ENCODE measurements at regions of chr17 and their contacts with region 1.

Region 1: GRCh38 chr17:34420254-34420766 is 57.3 kb upstream of the CCL1 start:
- DNase-seq: peak; percentile 47 to 65 (median 64)
- H3K4me3 ChIP-seq: no peak overlapping the region
- H3K4me3 Mint-ChIP-seq: no peak overlapping the region
- H3K27ac ChIP-seq: no peak overlapping the region
- H3K27ac Mint-ChIP-seq: no peak overlapping the region
- H3K4me1 ChIP-seq: peaks cover 9% of the 10 kb centered on the region in 2 donors
- H3K4me1 Mint-ChIP-seq: peaks cover 10% of the 10 kb centered on the region
- H3K27me3 ChIP-seq: peaks cover 6 to 21% of the 10 kb centered on the region in 2 donors
- H3K27me3 Mint-ChIP-seq: peaks cover 13 to 37% (median 27%) of the 10 kb centered on the region in 3 donors
- CTCF ChIP-seq: peak; percentile 96

Region 2: GRCh38 chr17:34370997-34371395 is 49.3 kb before region 1 on chr17:
- intact Hi-C with region 1: no loop called
- DNase-seq: peak; percentile 60 to 79 (median 77)
- H3K4me3 ChIP-seq: peak overlapping the region in 1 of 3 experiments; percentile 13
- H3K4me3 Mint-ChIP-seq: peak overlapping the region in 1 of 2 donors; percentile 35
- H3K27ac ChIP-seq: peak overlapping the region; percentile 81 to 85
- H3K27ac Mint-ChIP-seq: peak overlapping the region in 4 of 7 donors; percentile 89 to 94 (median 92)
- H3K4me1 ChIP-seq: peaks cover 76 to 82% of the 10 kb centered on the region in 2 donors
- H3K4me1 Mint-ChIP-seq: peaks cover 14% of the 10 kb centered on the region
- H3K27me3 ChIP-seq: no peaks in the 10 kb centered on the region
- H3K27me3 Mint-ChIP-seq: peaks cover 0 to 2% (median 0%) of the 10 kb centered on the region in 3 donors
- CTCF ChIP-seq: no peak

Region 3: GRCh38 chr17:34465789-34466188 is 45.5 kb after region 1 on chr17:
- intact Hi-C with region 1: no loop called
- DNase-seq: no peak
- H3K4me3 ChIP-seq: no peak overlapping the region
- H3K4me3 Mint-ChIP-seq: no peak overlapping the region
- H3K27ac ChIP-seq: no peak overlapping the region
- H3K27ac Mint-ChIP-seq: no peak overlapping the region
- H3K4me1 ChIP-seq: no peaks in the 10 kb centered on the region
- H3K4me1 Mint-ChIP-seq: no peaks in the 10 kb centered on the region
- H3K27me3 ChIP-seq: peaks cover 0 to 6% of the 10 kb centered on the region in 2 donors
- H3K27me3 Mint-ChIP-seq: peaks cover 5 to 13% (median 9%) of the 10 kb centered on the region in 3 donors
- CTCF ChIP-seq: no peak

Region 4: DNA sequence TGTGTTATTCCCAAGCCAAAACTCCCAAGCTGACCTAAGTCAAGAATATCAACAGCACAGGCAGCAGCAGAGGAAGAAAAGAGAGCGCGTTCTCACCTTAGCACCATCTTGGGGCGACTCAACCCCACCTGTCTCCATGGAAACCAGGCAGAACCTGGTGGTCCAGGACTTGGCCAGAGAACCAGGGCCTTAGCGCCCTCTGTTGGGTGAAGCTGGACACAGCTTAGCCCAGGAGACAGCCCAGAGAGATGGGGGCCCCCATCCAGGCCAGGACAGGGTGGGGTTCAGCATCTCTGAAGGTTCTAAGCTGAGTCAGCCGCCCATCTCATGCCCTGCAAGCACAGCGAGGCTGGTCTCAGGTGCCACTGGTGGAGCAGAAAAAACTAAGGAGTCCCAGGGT is 99.0 kb after region 1 on chr17:
- intact Hi-C with region 1: loop called in 1 of 2 experiments (anchors 5 kb)
- DNase-seq: peak; percentile 3 to 23 (median 11)
- H3K4me3 ChIP-seq: no peak overlapping the region
- H3K4me3 Mint-ChIP-seq: no peak overlapping the region
- H3K27ac ChIP-seq: no peak overlapping the region
- H3K27ac Mint-ChIP-seq: no peak overlapping the region
- H3K4me1 ChIP-seq: no peaks in the 10 kb centered on the region
- H3K4me1 Mint-ChIP-seq: no peaks in the 10 kb centered on the region
- H3K27me3 ChIP-seq: no peaks in the 10 kb centered on the region
- H3K27me3 Mint-ChIP-seq: peaks cover 5 to 10% (median 9%) of the 10 kb centered on the region in 3 donors
- CTCF ChIP-seq: peak; percentile 69

Region 5: GRCh38 chr17:34527908-34528470 is 107.7 kb after region 1 on chr17:
- intact Hi-C with region 1: loop called in 1 of 2 experiments (anchors 5 kb)
- DNase-seq: no peak
- H3K4me3 ChIP-seq: no peak overlapping the region
- H3K4me3 Mint-ChIP-seq: no peak overlapping the region
- H3K27ac ChIP-seq: no peak overlapping the region
- H3K27ac Mint-ChIP-seq: no peak overlapping the region
- H3K4me1 ChIP-seq: no peaks in the 10 kb centered on the region
- H3K4me1 Mint-ChIP-seq: no peaks in the 10 kb centered on the region
- H3K27me3 ChIP-seq: peaks cover 0 to 2% of the 10 kb centered on the region in 2 donors
- H3K27me3 Mint-ChIP-seq: peaks cover 8 to 20% (median 10%) of the 10 kb centered on the region in 3 donors
- CTCF ChIP-seq: no peak

Region 6: GRCh38 chr17:34637548-34638525 is 217.5 kb after region 1 on chr17:
- intact Hi-C with region 1: loop called in 1 of 2 experiments (anchors 2 kb)
- DNase-seq: peak; percentile 39 to 68 (median 51)
- H3K4me3 ChIP-seq: peak overlapping the region in 2 of 3 experiments; percentile 11 to 55
- H3K4me3 Mint-ChIP-seq: peak overlapping the region; percentile 59 to 80
- H3K27ac ChIP-seq: no peak overlapping the region
- H3K27ac Mint-ChIP-seq: no peak overlapping the region
- H3K4me1 ChIP-seq: peaks cover 3 to 10% of the 10 kb centered on the region in 2 donors
- H3K4me1 Mint-ChIP-seq: peaks cover 6% of the 10 kb centered on the region
- H3K27me3 ChIP-seq: peaks cover 12 to 45% of the 10 kb centered on the region in 2 donors
- H3K27me3 Mint-ChIP-seq: peaks cover 44 to 55% (median 48%) of the 10 kb centered on the region in 3 donors
- CTCF ChIP-seq: peak; percentile 75

Region 7: DNA sequence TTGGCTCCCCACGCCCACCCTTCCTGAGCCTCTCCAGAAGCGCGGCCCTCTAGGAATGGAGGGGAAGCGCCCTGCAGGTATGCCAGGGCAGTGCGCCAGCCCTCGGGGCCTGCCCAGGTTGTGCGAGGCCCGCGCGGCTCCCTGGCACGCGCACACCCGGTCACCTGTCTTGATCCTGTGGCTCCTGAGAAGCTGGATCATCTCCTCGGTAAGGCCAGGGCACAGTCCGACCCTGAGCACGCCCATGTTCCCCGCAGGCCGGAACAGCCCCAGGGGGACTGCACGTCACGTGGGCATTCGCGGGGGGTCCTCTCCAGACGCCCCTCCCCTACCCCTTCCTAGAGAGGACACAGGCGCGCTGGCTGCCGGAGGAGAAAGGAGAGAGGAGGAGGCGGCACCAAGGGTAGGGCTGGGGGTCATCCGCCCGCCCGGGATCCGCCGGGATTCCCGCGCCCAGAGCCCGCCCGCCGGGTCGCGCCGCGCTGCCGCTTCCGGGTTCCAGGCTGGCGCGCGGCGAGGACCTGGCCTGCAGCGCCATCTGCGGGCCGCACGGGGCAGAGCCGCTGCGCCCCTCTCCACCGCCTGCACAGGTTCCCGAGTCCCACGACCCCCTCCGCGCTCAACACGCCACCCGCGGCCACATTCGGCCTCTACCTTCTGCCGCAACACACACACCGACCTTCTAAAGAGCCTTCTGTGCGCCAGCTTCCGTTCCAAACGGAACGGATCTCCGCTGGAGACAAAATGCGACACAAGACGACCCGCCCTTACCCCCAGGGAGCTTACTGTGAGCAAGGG is 699.3 kb after region 1 on chr17 and contains the start of gene RAD51D:
- intact Hi-C with region 1: loop called (anchors 5 to 10 kb)
- DNase-seq: peak; percentile 62 to 74 (median 72)
- H3K4me3 ChIP-seq: peak within 1 kb of the TSS; percentile 73 to 97 (median 83)
- H3K4me3 Mint-ChIP-seq: peak within 1 kb of the TSS; percentile 90 to 95
- H3K27ac ChIP-seq: peak within 1 kb of the TSS in 1 of 2 donors; percentile 82
- H3K27ac Mint-ChIP-seq: peak within 1 kb of the TSS; percentile 70 to 89 (median 77)
- H3K4me1 ChIP-seq: peaks cover 16 to 21% of the 10 kb centered on the region in 2 donors
- H3K4me1 Mint-ChIP-seq: peaks cover 35% of the 10 kb centered on the region
- H3K27me3 ChIP-seq: no peaks in the 10 kb centered on the region
- H3K27me3 Mint-ChIP-seq: peaks cover 0 to 5% (median 4%) of the 10 kb centered on the region in 3 donors
- CTCF ChIP-seq: peak; percentile 90
- polyA plus RNA-seq, gene RAD51D: 4.4 to 6.9 (median 5.8) TPM

Measured in CD14-positive monocyte (primary cell).